ENCODE measurements at regions of chr3 and their contacts with region 1.

Region 1: GRCh38 chr3:127652231-127652995 is 20.3 kb upstream of the ABTB1 start:
- DNase-seq: no peak
- H3K4me3 ChIP-seq: no peak overlapping the region
- H3K27ac ChIP-seq: no peak overlapping the region
- H3K4me1 ChIP-seq: no peaks in the 10 kb centered on the region
- H3K27me3 ChIP-seq: no peaks in the 10 kb centered on the region
- CTCF ChIP-seq: peak; percentile 59 to 79 (median 74)
- POLR2A ChIP-seq: no peak

Region 2: GRCh38 chr3:127690823-127691452 is 38.5 kb after region 1 on chr3:
- intact Hi-C with region 1: loop called (anchors 5 kb)
- DNase-seq: no peak
- H3K4me3 ChIP-seq: no peak overlapping the region
- H3K27ac ChIP-seq: peak overlapping the region in 1 of 2 donors; percentile 50
- H3K4me1 ChIP-seq: peaks cover 5% of the 10 kb centered on the region
- H3K27me3 ChIP-seq: no peaks in the 10 kb centered on the region
- CTCF ChIP-seq: peak in 3 of 4 experiments; percentile 17 to 65 (median 57)
- POLR2A ChIP-seq: no peak

Region 3: DNA sequence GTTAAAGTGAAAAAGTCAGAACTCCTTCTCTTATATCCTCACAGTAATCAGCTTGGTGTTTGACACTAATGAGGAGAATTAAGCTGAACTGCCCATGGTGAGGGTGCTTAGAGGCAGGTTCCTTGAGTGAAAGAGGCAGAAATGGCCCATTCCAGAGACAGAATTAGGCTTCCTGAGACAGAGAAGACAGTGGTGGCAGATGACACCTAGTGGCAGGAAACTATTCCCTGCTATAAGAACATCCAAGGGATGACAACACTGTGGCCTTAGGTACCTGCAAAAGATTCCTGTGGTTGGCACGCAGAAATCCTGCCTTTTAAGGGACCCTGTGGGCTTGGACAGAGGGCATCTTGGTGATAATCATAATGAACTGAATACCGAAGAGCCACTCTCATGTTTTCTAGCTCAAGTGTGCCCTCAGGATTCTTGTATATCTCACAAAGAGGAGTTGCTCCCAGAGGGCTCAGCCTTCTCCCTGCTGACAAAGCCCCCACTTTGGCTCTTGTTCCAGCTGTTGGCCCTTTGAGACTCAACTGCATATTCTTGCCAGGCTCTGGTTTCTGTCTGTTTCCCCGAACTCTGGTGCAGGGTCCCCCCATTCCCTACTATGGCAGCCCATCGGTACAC is 318.7 kb after region 1 on chr3:
- intact Hi-C with region 1: loop called (anchors 1 kb)
- DNase-seq: peak; percentile 39
- H3K4me3 ChIP-seq: no peak overlapping the region
- H3K27ac ChIP-seq: no peak overlapping the region
- H3K4me1 ChIP-seq: no peaks in the 10 kb centered on the region
- H3K27me3 ChIP-seq: no peaks in the 10 kb centered on the region
- CTCF ChIP-seq: peak; percentile 27 to 75 (median 58)
- POLR2A ChIP-seq: no peak